ENCODE measurements at regions of chr4 and their contacts with region 1.

Region 1: DNA sequence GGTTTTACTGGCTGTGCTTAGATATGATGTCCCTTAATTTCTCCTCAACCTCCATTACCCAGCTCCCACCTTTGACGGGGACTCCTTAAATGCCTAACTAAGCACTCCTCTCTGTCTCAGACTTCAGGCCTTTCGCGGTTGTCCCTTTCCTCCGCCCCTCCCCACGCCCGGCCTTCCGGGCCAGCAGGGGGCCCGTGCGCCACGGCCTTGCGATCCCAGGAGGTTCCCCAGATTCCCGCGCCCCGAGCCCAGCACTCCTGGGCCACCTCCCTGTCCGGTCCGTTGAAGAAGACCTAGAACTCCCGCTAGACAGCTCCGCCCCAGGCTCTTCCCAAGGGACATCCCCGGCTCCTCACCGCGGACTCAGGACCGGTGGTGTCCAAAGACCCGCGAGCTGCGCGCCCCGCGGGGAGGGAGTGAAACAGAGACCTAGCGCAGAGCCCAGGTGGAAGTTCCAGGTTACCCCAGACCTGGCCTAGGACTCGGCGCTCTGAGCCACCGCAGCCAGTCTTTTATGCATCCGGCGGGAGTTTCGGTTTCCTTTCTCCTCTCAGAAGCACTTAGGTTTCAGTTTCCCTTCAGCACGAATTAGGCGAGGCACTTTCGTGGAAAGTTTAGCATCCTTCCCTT is at the start of gene DDX60:
- DNase-seq: peak; percentile 91
- H3K4me3 ChIP-seq: peak within 1 kb of the TSS; percentile 57 to 84 (median 70)
- H3K27ac ChIP-seq: peak within 1 kb of the TSS; percentile 91
- H3K4me1 ChIP-seq: peaks cover 17% of the 10 kb centered on the region
- H3K27me3 ChIP-seq: no peaks in the 10 kb centered on the region
- CTCF ChIP-seq: peak; percentile 29 to 68
- total RNA-seq, gene DDX60: 5.5 to 7.1 TPM

Region 2: GRCh38 chr4:167578906-167579305 is 739.5 kb before region 1 on chr4:
- CTCF ChIA-PET with region 1: no interaction called
- dilution Hi-C with region 1: no loop called
- in situ Hi-C with region 1: no loop called
- intact Hi-C with region 1: no loop called
- DNase-seq: no peak
- H3K4me3 ChIP-seq: no peak overlapping the region
- H3K27ac ChIP-seq: no peak overlapping the region
- H3K4me1 ChIP-seq: no peaks in the 10 kb centered on the region
- H3K27me3 ChIP-seq: no peaks in the 10 kb centered on the region
- CTCF ChIP-seq: no peak

Region 3: GRCh38 chr4:168119890-168120289 is 198.5 kb before region 1 on chr4:
- CTCF ChIA-PET with region 1: no interaction called
- dilution Hi-C with region 1: no loop called
- in situ Hi-C with region 1: no loop called
- intact Hi-C with region 1: no loop called
- DNase-seq: no peak
- H3K4me3 ChIP-seq: no peak overlapping the region
- H3K27ac ChIP-seq: no peak overlapping the region
- H3K4me1 ChIP-seq: peaks cover 13% of the 10 kb centered on the region
- H3K27me3 ChIP-seq: no peaks in the 10 kb centered on the region
- CTCF ChIP-seq: no peak

Region 4: DNA sequence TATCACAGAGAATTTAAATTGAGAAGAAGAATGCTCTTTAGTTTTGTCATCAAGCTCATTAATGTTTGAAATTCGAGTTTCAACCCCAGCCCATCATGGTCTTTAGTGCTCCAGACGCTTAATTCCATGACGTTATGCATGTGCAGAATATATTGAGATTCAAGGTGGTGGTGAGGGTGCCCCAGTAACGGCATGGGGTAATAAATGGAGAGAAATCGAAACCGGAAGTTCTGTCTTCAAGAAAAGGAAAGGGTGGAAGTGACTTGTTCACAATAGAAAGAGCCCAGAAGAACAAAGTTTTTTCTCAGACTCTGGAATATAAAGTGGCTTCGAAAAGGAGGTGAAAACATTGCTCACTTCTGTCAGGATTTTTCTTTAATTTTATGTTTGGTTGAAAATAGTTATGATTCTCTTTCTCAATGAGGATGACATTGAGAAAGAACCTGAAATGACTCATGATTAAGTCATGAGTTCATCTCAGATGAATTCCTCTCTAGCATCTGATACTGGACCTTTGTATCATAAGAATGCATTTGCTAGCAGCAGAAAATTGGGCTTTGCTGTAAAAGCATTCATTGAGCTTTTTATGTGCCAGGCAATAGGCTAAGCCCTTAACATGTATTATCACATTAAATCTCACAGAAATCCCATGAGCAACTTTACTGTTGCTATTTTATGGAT is 162.7 kb after region 1 on chr4:
- CTCF ChIA-PET with region 1: no interaction called
- dilution Hi-C with region 1: no loop called
- in situ Hi-C with region 1: no loop called
- intact Hi-C with region 1: loop called (anchors 1 kb)
- DNase-seq: peak; percentile 81
- H3K4me3 ChIP-seq: peak overlapping the region; percentile 75 to 83 (median 83)
- H3K27ac ChIP-seq: peak overlapping the region; percentile 98
- H3K4me1 ChIP-seq: peaks cover 26% of the 10 kb centered on the region
- H3K27me3 ChIP-seq: no peaks in the 10 kb centered on the region
- CTCF ChIP-seq: no peak

Region 5: DNA sequence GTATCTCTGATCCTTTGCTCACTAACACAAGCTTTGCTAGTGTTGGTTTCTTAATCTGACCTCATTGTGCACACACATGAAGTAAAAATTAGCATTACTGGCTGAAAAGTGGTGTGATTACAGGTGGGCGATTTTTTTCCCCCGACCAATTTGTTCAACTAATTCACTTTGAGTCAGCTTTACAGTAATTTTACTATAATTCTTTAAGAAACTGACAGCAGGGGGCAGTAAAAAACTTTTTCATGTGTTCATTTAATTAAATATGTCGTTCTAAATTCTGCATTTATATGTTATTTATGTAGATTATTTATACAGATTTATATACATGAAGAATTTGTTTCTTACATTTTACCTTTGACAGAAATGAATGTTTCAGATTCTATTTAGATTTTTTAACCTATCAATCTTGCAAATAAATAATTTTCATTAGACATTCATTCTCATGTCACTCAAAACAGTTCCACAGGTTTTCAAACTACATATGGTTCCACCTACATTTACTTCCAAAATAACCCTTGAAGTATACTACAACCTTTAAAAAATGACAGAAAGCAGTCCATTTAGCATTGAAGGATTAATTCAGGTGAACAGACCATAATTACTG is 196.0 kb after region 1 on chr4:
- CTCF ChIA-PET with region 1: no interaction called
- dilution Hi-C with region 1: no loop called
- in situ Hi-C with region 1: no loop called
- intact Hi-C with region 1: loop called (anchors 2 kb)
- DNase-seq: peak; percentile 24
- H3K4me3 ChIP-seq: no peak overlapping the region
- H3K27ac ChIP-seq: no peak overlapping the region
- H3K4me1 ChIP-seq: no peaks in the 10 kb centered on the region
- H3K27me3 ChIP-seq: no peaks in the 10 kb centered on the region
- CTCF ChIP-seq: peak; percentile 31 to 36

Region 6: DNA sequence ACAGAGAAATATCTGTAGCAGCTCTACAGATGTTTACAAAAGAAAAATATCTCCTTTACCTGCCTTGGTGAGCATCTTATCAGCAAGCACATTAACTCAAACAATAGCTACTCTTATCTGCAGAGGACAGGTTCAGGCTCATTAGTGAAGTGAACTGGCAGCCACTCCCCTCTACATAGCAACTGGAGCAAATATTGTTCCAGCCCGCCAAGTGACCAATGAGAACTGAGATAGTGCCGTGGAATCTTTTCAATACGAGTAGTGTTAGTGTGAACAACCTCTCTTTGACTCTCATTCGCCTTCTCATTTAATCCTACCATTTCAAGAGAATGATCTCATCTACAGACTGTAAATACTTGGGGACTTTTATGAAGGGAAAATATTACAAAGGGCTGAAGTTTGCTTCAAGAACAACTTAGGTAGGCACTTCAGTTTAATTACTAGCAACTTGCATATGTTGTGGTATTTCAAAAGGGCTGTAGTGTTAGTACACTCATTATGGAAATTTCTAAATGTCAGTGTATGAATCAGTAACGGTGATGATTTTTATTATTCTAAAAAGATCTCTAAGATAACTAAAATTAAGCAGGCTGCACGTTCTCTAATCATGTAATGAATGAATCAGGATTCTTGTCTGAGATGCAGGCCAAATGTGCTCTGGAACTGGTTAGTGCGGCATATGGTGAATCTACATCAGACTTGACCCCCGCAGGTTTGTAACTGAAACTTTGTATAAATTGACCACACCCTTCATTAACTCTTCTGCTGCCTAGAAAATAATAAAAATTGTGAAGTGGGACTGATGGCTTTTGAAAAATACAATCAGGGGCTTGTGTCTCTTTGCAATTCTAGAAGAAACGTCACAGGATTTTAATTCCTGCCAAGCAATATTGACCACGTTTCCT is 250.9 kb after region 1 on chr4:
- CTCF ChIA-PET with region 1: no interaction called
- dilution Hi-C with region 1: loop called (anchors 25 kb)
- in situ Hi-C with region 1: no loop called
- intact Hi-C with region 1: no loop called
- DNase-seq: peak; percentile 91
- H3K4me3 ChIP-seq: peak overlapping the region in 2 of 3 experiments; percentile 14 to 26
- H3K27ac ChIP-seq: peak overlapping the region; percentile 75
- H3K4me1 ChIP-seq: peaks cover 17% of the 10 kb centered on the region
- H3K27me3 ChIP-seq: no peaks in the 10 kb centered on the region
- CTCF ChIP-seq: no peak

Measured in mammary epithelial cell (primary cell).